ENCODE measurements at regions of chr17 and their contacts with region 1.

Region 1: GRCh38 chr17:43760254-43760852 is 1.8 kb upstream of the SOST start:
- DNase-seq: peak; percentile 89 to 98 (median 97)
- ATAC-seq: peak; percentile 99
- H3K4me3 ChIP-seq: no peak overlapping the region
- H3K4me1 ChIP-seq: peaks cover 7% of the 10 kb centered on the region
- CTCF ChIP-seq: peak; percentile 93

Region 2: DNA sequence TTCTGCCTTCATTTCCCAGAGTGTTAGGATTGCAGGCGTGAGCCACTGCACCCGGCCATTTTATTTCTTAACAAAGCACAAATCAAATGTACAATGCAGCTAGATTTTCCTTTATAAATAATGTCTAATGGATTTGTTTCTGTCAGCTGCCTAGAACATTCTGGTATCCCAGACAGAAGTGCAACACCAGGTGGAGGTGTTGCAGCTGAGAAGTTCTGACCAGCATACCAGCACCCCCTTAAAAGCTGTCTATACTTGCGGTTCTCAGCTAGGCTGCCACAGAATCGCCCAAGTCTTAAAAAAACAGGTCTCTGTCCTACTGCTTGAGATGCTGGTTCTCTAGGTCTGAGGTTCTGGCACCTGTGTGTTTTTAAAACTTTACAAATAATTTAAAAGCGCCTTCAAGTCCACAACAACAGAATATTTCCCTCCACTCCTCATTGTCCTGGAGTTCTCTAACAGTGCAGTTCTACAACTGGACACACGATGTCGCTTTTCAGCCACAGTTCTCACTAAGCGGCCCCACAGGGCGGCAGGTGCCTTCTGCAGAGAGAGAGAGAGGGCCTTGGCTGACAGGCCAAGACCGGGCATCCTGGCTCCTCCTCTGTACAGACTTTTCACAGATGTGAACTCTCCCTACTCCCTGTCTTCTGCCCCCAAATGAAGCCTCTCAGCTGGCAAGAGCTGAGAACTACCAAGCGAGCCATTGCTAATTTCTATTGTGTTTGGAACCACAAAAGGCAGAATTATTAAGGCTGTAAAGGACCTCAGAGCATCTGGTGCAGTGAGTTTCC is 66.1 kb before region 1 on chr17:
- intact Hi-C with region 1: loop called (anchors 1 to 5 kb)
- DNase-seq: peak; percentile 64 to 89 (median 66)
- ATAC-seq: peak; percentile 96
- H3K4me3 ChIP-seq: no peak overlapping the region
- H3K4me1 ChIP-seq: no peaks in the 10 kb centered on the region
- CTCF ChIP-seq: peak; percentile 65

Region 3: DNA sequence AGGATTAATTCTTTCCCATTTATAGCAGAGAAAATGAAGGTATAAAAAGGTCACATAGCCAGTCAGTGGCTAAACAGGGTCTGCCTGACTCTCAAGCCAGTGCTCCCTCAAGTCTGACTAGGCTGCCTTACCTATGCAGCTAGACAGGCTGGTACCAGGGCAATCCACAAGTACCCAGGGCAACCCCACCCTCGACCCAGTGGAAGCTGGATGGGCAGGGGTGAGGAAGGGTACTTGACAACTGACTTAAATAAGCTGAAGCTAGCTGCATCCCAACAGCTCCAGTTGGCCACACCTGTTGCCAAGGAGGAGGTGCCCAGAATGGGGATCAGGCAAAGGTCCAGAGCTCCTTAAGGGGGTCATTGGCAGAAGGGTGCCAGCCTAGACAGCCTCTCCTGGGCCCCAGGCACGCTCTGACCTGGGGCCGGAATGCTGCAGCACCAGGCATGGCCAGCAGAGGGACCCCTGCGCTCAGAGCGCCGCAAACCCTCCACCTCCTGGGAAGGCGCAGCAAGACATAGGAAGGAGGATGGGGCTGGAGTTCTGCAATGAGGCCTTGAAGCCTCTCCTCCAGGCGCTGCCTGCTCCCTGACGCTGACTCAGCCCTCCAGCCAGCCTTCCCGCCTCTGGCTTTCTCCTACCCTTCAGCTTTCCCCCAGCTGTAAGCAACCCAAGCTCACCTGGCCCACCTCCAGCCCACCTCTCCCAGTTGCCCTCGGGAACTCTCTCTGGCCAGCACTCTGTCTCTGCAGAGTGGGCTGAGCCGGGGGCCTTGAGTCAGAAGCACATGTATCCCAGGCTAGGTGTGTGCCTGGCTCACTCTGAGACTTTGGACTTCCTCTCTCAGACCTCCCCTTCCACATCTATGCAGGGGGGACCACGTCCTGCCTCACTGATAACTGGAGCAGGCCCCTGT is 118.2 kb after region 1 on chr17:
- intact Hi-C with region 1: no loop called
- DNase-seq: peak; percentile 68 to 88 (median 83)
- ATAC-seq: peak; percentile 90
- H3K4me3 ChIP-seq: no peak overlapping the region
- H3K4me1 ChIP-seq: peaks cover 20% of the 10 kb centered on the region
- CTCF ChIP-seq: peak; percentile 96

Measured in mucosa of descending colon (tissue), 3 donors.